ENCODE measurements at regions of chr1 and their contacts with region 1.

Region 1: GRCh38 chr1:116737020-116737854 is 17.0 kb upstream of the CD2 start:
- DNase-seq: peak; percentile 68
- ATAC-seq: peak; percentile 59; the same call in 1 of the 2 replicates
- H3K4me3 ChIP-seq: no peak overlapping the region
- H3K27ac ChIP-seq: no peak overlapping the region
- H3K4me1 ChIP-seq: no peaks in the 10 kb centered on the region
- H3K27me3 ChIP-seq: no peaks in the 10 kb centered on the region
- CTCF ChIP-seq: peak; percentile 89

Region 2: GRCh38 chr1:116754198-116754977 is 17.2 kb after region 1 on chr1 and contains the start of gene CD2:
- CTCF ChIA-PET with region 1: no interaction called
- POLR2A ChIA-PET with region 1: no interaction called
- intact Hi-C with region 1: no loop called
- DNase-seq: no peak
- ATAC-seq: no peak
- H3K4me3 ChIP-seq: no peak within 1 kb of the TSS
- H3K27ac ChIP-seq: no peak within 1 kb of the TSS
- H3K4me1 ChIP-seq: no peaks in the 10 kb centered on the region
- H3K27me3 ChIP-seq: no peaks in the 10 kb centered on the region
- CTCF ChIP-seq: no peak
- total RNA-seq, gene CD2: not detected in 2 replicates

Region 3: GRCh38 chr1:116817582-116818064 is 80.4 kb after region 1 on chr1:
- CTCF ChIA-PET with region 1: no interaction called
- POLR2A ChIA-PET with region 1: no interaction called
- intact Hi-C with region 1: loop called (anchors 2 kb)
- DNase-seq: peak; percentile 79
- ATAC-seq: peak; percentile 93
- H3K4me3 ChIP-seq: no peak overlapping the region
- H3K27ac ChIP-seq: no peak overlapping the region
- H3K4me1 ChIP-seq: 0 out of 2 replicates have a peak, but pooled peaks cover 10% of the 10 kb centered on the region
- H3K27me3 ChIP-seq: no peaks in the 10 kb centered on the region
- CTCF ChIP-seq: peak; percentile 97

Region 4: GRCh38 chr1:116909510-116910378 is 172.5 kb after region 1 on chr1 and contains the start of gene PTGFRN:
- CTCF ChIA-PET with region 1: no interaction called
- POLR2A ChIA-PET with region 1: no interaction called
- intact Hi-C with region 1: no loop called
- DNase-seq: peak; percentile 71
- ATAC-seq: peak; percentile 48
- H3K4me3 ChIP-seq: peak within 1 kb of the TSS; percentile 85
- H3K27ac ChIP-seq: peak within 1 kb of the TSS; percentile 36
- H3K4me1 ChIP-seq: peaks cover 60% of the 10 kb centered on the region
- H3K27me3 ChIP-seq: no peaks in the 10 kb centered on the region
- CTCF ChIP-seq: no peak
- total RNA-seq, gene PTGFRN: 57.4 and 77.8 TPM in 2 replicates

Region 5: GRCh38 chr1:116934586-116935207 is 197.5 kb after region 1 on chr1:
- CTCF ChIA-PET with region 1: interaction called, 3 read pairs
- POLR2A ChIA-PET with region 1: no interaction called
- intact Hi-C with region 1: loop called (anchors 1 kb)
- DNase-seq: peak; percentile 31
- ATAC-seq: no peak
- H3K4me3 ChIP-seq: no peak overlapping the region
- H3K27ac ChIP-seq: no peak overlapping the region
- H3K4me1 ChIP-seq: no peaks in the 10 kb centered on the region; the same call in 1 of the 2 replicates
- H3K27me3 ChIP-seq: no peaks in the 10 kb centered on the region
- CTCF ChIP-seq: peak; percentile 62